ENCODE measurements at regions of chr17 and their contacts with region 1.

Region 1: GRCh38 chr17:28951991-28952975 is 965 bp upstream of the PHF12 start:
- DNase-seq: peak; percentile 92 to 98
- ATAC-seq: peak; percentile 81 to 92 (median 87)
- H3K4me3 ChIP-seq: peak overlapping the region; percentile 40 to 93 (median 74)
- H3K27ac ChIP-seq: peak overlapping the region; percentile 87 to 99 (median 98)
- H3K4me1 ChIP-seq: peaks cover 8 to 28% (median 25%) of the 10 kb centered on the region in 9 donors
- H3K27me3 ChIP-seq: no peaks in the 10 kb centered on the region
- CTCF ChIP-seq: peak in 1 of 9 donors; percentile 8

Region 2: DNA sequence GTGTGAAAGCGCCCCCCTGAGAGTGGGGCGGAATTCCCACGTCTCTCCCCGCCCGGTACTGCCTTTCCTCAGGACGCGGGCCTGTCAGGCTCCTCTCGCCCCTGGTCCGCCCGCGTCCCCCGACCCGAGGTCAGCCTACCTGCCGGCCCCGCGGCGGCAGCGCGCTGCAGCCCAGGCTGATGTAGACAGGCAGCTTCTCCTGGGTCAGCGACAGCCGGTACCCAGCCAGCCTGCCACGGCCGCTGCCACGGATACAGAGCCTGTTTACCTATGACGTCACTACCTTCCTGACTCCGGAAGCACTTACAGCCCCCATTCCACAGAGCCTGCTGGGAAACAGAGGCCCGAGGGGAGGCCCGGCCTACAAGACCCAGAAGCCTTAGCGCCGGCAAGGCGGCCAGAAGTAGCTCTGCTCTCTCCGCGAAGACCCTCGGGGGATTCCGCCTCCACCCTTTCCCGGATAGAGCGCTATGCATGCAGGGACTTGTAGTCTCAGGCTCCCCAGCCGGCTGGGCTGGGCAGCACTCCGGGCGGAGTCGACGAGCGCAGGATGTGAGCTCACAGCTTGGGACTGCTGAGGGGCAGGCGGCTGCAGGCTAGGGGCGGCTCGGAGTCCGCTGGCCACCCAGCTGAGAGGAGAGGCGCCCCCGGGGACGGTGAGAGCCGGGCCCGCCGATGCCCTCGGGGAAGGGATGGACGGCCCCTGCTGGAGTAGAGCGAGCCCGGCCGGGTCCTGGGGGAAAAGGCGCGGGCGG is 616.9 kb before region 1 on chr17 and contains the starts of genes IFT20 and TNFAIP1:
- intact Hi-C with region 1: loop called in 2 of 10 experiments (anchors 5 to 10 kb)
- DNase-seq: peak; percentile 98 to 99
- ATAC-seq: peak; percentile 95 to 97 (median 96)
- H3K4me3 ChIP-seq: peak within 1 kb of the TSS; percentile 74 to 95 (median 88)
- H3K27ac ChIP-seq: peak within 1 kb of the TSS; percentile 90 to 99 (median 98)
- H3K4me1 ChIP-seq: peaks cover 15 to 63% (median 57%) of the 10 kb centered on the region in 9 donors
- H3K27me3 ChIP-seq: no peaks in the 10 kb centered on the region
- CTCF ChIP-seq: peak in 1 of 9 donors; percentile 8
- total RNA-seq, gene IFT20: 8.5 to 15.4 (median 10.8) TPM
- total RNA-seq, gene TNFAIP1: 33.0 to 87.6 (median 45.8) TPM

Region 3: GRCh38 chr17:28842282-28843012 is 109.8 kb before region 1 on chr17 and contains the start of gene FAM222B:
- intact Hi-C with region 1: loop called in 2 of 10 experiments (anchors 10 kb)
- DNase-seq: peak; percentile 83 to 89
- ATAC-seq: peak; percentile 99 to 100 (median 100)
- H3K4me3 ChIP-seq: peak within 1 kb of the TSS; percentile 72 to 96 (median 82)
- H3K27ac ChIP-seq: peak within 1 kb of the TSS; percentile 57 to 91 (median 86)
- H3K4me1 ChIP-seq: peaks cover 0 to 33% (median 15%) of the 10 kb centered on the region in 9 donors
- H3K27me3 ChIP-seq: no peaks in the 10 kb centered on the region
- CTCF ChIP-seq: peak in 1 of 9 donors; percentile 19
- total RNA-seq, gene FAM222B: 13.2 to 19.4 (median 16.0) TPM

Region 4: GRCh38 chr17:28896884-28897768 is 55.2 kb before region 1 on chr17 and contains the start of gene FLOT2:
- intact Hi-C with region 1: loop called in 2 of 10 experiments (anchors 5 kb)
- DNase-seq: peak; percentile 47 to 64
- ATAC-seq: peak; percentile 77 to 91 (median 82)
- H3K4me3 ChIP-seq: peak within 1 kb of the TSS; percentile 65 to 98 (median 90)
- H3K27ac ChIP-seq: peak within 1 kb of the TSS; percentile 74 to 97 (median 91)
- H3K4me1 ChIP-seq: peaks cover 7 to 61% (median 44%) of the 10 kb centered on the region in 9 donors
- H3K27me3 ChIP-seq: no peaks in the 10 kb centered on the region
- CTCF ChIP-seq: peak in 4 of 9 donors; percentile 17 to 51 (median 39)
- total RNA-seq, gene FLOT2: 82.8 to 159 (median 90.7) TPM

Region 5: GRCh38 chr17:28902819-28903545 is 49.3 kb before region 1 on chr17 and contains the start of gene DHRS13:
- intact Hi-C with region 1: loop called in 4 of 10 experiments (anchors 5 kb)
- DNase-seq: peak; percentile 85 to 93
- ATAC-seq: peak; percentile 89 to 94 (median 92)
- H3K4me3 ChIP-seq: peak within 1 kb of the TSS; percentile 19 to 83 (median 73)
- H3K27ac ChIP-seq: peak within 1 kb of the TSS; percentile 48 to 88 (median 78)
- H3K4me1 ChIP-seq: peaks cover 6 to 49% (median 22%) of the 10 kb centered on the region in 9 donors
- H3K27me3 ChIP-seq: no peaks in the 10 kb centered on the region
- CTCF ChIP-seq: peak; percentile 62 to 94 (median 86)
- total RNA-seq, gene DHRS13: 1.1 to 5.6 (median 2.2) TPM

Region 6: DNA sequence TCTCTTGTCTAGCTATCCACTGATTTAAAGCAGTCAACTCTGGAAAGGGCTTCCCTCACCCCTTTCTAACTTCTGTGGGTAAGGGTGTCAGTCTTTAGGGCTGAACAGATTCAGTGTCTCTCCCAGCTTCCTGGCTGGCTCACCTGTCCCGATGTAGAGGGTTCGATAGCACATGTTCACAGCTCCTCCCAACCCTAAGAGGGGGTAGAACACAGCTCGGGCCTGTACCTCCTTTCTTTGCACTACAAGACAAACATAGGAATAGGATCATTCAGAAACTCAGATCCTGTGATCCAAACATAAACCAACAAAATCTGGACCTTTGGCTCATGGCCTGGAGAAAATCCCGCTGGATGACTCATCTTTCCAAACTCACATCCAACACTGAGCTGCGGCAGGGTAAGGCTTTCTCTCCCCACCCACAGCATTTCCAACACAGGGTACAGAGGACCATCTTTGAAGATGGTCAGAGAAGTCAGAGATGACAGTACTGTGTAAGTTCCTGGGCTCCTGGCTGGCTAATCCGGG is 43.6 kb before region 1 on chr17:
- intact Hi-C with region 1: loop called in 3 of 10 experiments (anchors 5 kb)
- DNase-seq: peak in 1 of 2 donors; percentile 61
- ATAC-seq: peak; percentile 30 to 69 (median 62)
- H3K4me3 ChIP-seq: no peak overlapping the region
- H3K27ac ChIP-seq: peak overlapping the region in 8 of 10 donors; percentile 34 to 68 (median 58)
- H3K4me1 ChIP-seq: peaks cover 4 to 41% (median 25%) of the 10 kb centered on the region in 9 donors
- H3K27me3 ChIP-seq: no peaks in the 10 kb centered on the region
- CTCF ChIP-seq: no peak

Region 7: DNA sequence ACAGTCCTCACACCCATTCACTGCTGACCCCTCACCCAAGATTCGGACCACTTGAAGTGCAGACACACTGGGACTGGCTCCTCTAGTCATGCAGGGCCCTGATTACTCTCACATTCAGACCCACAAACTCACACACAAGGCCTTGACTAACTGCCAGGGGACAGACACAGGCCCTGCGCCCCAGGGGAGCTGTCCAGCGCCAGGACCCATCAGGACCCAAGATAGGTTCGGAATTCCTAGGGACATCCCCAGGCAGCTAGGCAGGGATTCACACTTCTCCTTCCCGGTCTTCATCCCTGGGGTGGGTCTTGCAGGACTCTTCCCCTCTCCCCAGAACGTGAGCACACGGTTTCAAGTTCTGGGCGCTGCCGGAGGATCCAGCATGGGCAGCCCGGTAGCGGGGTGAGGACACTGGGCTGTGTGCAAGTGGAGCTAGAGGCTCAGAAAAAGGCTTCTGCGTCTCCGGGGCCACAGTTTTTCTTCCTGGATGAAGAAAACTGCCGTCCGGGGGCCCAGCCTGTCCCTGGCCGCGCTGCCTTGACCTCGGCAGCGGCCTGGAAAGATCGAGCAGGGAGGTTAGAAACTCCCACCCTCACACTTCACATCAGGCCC is 51.9 kb after region 1 on chr17:
- intact Hi-C with region 1: no loop called
- DNase-seq: no peak
- ATAC-seq: peak in 3 of 8 donors; percentile 29 to 49 (median 35)
- H3K4me3 ChIP-seq: no peak overlapping the region
- H3K27ac ChIP-seq: no peak overlapping the region
- H3K4me1 ChIP-seq: peaks cover 0 to 8% (median 0%) of the 10 kb centered on the region in 9 donors
- H3K27me3 ChIP-seq: peaks cover 4 to 62% (median 55%) of the 10 kb centered on the region in 7 donors
- CTCF ChIP-seq: no peak

Region 8: GRCh38 chr17:29059281-29059680 is 107.0 kb after region 1 on chr17:
- intact Hi-C with region 1: no loop called
- DNase-seq: no peak
- ATAC-seq: no peak
- H3K4me3 ChIP-seq: no peak overlapping the region
- H3K27ac ChIP-seq: no peak overlapping the region
- H3K4me1 ChIP-seq: peaks cover 0 to 29% (median 0%) of the 10 kb centered on the region in 9 donors
- H3K27me3 ChIP-seq: no peaks in the 10 kb centered on the region
- CTCF ChIP-seq: no peak

Region 9: DNA sequence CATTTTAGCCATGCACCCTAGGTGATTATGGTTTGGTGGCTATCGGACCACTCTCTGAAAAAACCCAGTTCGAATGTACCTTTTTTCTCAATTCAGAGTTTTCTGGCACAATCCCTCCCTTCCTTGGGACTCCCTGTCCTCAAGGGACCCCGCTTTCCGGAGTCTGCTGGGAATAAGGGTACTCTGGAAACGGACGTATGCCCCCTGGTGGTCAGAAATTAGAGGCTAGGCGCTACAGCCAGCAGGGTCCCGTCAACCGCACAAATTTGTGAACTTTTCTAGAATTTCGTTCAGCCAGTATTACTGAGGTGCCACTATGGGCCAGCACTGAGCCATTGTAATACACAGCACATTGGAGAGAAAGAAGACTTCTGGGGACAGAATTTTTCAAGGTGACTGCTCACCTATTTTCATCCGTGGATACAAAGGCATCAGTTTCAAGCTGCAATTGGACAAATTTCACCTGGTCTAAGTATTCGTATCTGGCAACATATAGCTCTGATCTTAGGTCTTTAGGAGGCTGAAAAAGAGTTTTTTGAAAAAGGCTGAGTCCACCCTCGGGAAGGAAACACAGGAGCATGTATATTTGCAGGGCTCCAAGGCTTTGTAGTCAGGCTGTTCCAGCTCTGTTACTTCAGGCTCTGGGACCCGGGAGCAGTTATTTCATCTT is 267.2 kb after region 1 on chr17:
- intact Hi-C with region 1: loop called in 1 of 10 experiments (anchors 10 kb)
- DNase-seq: peak; percentile 56 to 83
- ATAC-seq: peak; percentile 87 to 96 (median 91)
- H3K4me3 ChIP-seq: no peak overlapping the region
- H3K27ac ChIP-seq: no peak overlapping the region
- H3K4me1 ChIP-seq: peaks cover 0 to 11% (median 8%) of the 10 kb centered on the region in 9 donors
- H3K27me3 ChIP-seq: no peaks in the 10 kb centered on the region
- CTCF ChIP-seq: peak; percentile 88 to 97 (median 92)

Measured in heart right ventricle (tissue), 16 donors.